SK-N-SH (cell line): ENCODE measurements at regions of chr11 and their contacts with region 1.

Region 1: DNA sequence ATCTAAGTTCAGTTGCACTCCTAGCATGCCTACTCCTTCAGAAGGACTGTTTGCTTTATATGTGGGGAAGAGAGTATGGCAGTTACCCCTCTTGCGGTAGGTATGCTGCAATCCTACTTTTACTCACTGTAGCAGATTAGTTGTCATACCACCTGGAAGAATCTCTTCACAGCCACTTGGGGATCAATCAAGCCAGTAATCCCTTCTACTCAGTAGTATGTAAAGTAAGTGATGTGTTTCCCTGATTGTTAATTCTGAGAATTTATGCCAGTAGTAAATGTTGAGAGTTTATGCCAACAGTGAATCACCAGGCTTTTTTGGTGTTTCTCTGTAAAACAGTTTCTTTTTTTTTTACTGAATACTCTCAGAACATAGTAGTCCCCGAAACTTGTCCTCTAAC is 34.4 kb downstream of the PRMT3 start:
- DNase-seq: no peak
- H3K4me3 ChIP-seq: no peak overlapping the region
- H3K27ac ChIP-seq: no peak overlapping the region
- H3K4me1 ChIP-seq: peaks cover 0 to 8% of the 10 kb centered on the region in 2 experiments; a peak in 2 of 4 replicates
- H3K27me3 ChIP-seq: no peaks in the 10 kb centered on the region
- CTCF ChIP-seq: no peak
- EP300 ChIP-seq: no peak
- RAD21 ChIP-seq: no peak

Region 2: GRCh38 chr11:20221566-20221965 is 200.4 kb before region 1 on chr11:
- CTCF ChIA-PET with region 1: no interaction called
- POLR2A ChIA-PET with region 1: no interaction called
- DNase-seq: no peak
- H3K4me3 ChIP-seq: no peak overlapping the region
- H3K27ac ChIP-seq: no peak overlapping the region
- H3K4me1 ChIP-seq: no peaks in the 10 kb centered on the region
- H3K27me3 ChIP-seq: no peaks in the 10 kb centered on the region
- CTCF ChIP-seq: no peak
- EP300 ChIP-seq: no peak
- RAD21 ChIP-seq: no peak

Region 3: GRCh38 chr11:20387241-20388095 is 34.5 kb before region 1 on chr11 and contains the start of gene PRMT3:
- CTCF ChIA-PET with region 1: no interaction called
- POLR2A ChIA-PET with region 1: no interaction called
- DNase-seq: peak; percentile 97
- H3K4me3 ChIP-seq: peak within 1 kb of the TSS; percentile 91 to 93
- H3K27ac ChIP-seq: peak within 1 kb of the TSS; percentile 88 to 94
- H3K4me1 ChIP-seq: peaks cover 5 to 6% of the 10 kb centered on the region in 2 experiments; a peak in 2 of 4 replicates
- H3K27me3 ChIP-seq: no peaks in the 10 kb centered on the region
- CTCF ChIP-seq: peak; percentile 99
- EP300 ChIP-seq: 0 out of 4 replicates have a peak, but pooled peaks of 1 of the 2 experiments have one; percentile 32
- RAD21 ChIP-seq: peak; percentile 62
- polyA plus RNA-seq, gene PRMT3: 10.8 and 14.9 TPM in 2 replicates

Region 4: GRCh38 chr11:20443596-20443995 is 21.6 kb after region 1 on chr11:
- CTCF ChIA-PET with region 1: interaction called, 15 read pairs
- POLR2A ChIA-PET with region 1: no interaction called
- DNase-seq: peak; percentile 17
- H3K4me3 ChIP-seq: no peak overlapping the region
- H3K27ac ChIP-seq: no peak overlapping the region
- H3K4me1 ChIP-seq: no peaks in the 10 kb centered on the region; a peak in 1 of 4 replicates
- H3K27me3 ChIP-seq: no peaks in the 10 kb centered on the region
- CTCF ChIP-seq: peak; percentile 64
- EP300 ChIP-seq: no peak
- RAD21 ChIP-seq: peak; percentile 73